ENCODE measurements at regions of chr11 and their contacts with region 1.

Region 1: DNA sequence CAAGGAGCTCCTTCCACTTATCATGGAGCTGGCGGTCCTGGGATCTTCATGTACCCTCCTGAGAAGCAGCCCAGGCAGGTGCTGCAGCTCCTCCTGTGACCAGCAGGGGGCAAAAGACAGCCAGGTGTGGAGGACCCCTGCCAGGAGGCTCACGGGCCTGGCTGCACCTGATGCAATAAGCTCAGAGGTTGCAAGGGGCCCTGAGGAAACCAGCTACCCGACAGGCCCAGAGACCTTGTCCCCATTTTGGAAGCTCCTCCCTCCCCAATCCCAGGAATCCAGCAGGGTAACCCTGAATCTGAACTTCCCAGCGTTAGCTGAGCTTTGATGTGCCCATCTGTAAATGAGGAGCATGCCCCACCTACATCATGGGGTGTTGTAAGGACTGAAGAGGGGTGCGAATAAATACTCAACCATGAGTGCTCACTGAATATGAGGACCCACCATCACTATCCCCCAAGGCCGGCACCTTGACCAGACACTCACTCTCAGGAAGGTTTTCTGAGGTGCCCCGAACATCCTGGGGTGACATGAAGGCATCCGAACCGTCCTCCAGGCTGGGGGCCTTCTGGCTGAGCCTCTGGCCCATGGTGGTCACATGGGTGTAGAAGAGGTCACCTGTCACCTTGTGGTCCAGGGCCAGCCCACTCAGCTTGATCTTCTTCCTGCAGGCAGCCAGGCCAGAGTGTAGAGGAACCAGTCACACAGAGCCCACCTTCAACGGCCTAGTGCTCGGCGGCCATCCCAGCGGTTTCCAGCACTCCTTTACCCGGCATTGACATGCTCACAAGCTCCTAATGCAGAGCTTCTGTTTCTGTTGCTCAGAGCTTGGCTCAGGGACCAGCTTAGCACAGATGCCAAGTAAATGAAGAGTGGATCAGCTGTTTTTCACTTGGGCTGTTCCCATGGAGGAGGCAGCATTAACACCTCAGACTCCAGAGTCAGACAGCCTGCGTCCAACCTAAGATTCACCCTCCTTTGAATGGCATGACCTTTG is 21.7 kb downstream of the SLC43A1 start:
- DNase-seq: peak; percentile 73
- ATAC-seq: peak; percentile 90
- H3K4me3 ChIP-seq: no peak overlapping the region
- H3K27ac ChIP-seq: peak overlapping the region; percentile 37; the same call in 1 of the 2 replicates
- H3K4me1 ChIP-seq: peaks cover 5 to 7% of the 10 kb centered on the region in 2 experiments; a peak in 2 of 4 replicates
- H3K27me3 ChIP-seq: no peaks in the 10 kb centered on the region
- CTCF ChIP-seq: peak; percentile 73 to 98 (median 87)
- POLR2A ChIP-seq: no peak
- RAD21 ChIP-seq: peak; percentile 78

Region 2: GRCh38 chr11:57345555-57346211 is 148.1 kb before region 1 on chr11:
- CTCF ChIA-PET with region 1: interaction called, 13 read pairs
- POLR2A ChIA-PET with region 1: no interaction called
- RAD21 ChIA-PET with region 1: no interaction called
- intact Hi-C with region 1: no loop called
- DNase-seq: peak; percentile 76
- ATAC-seq: peak; percentile 84
- H3K4me3 ChIP-seq: no peak overlapping the region
- H3K27ac ChIP-seq: no peak overlapping the region
- H3K4me1 ChIP-seq: peaks cover 3 to 19% of the 10 kb centered on the region in 2 experiments; a peak in 3 of 4 replicates
- H3K27me3 ChIP-seq: no peaks in the 10 kb centered on the region
- CTCF ChIP-seq: peak; percentile 44 to 69 (median 67); a peak in 5 of 6 replicates
- POLR2A ChIP-seq: no peak
- RAD21 ChIP-seq: peak; percentile 74

Region 3: GRCh38 chr11:57482782-57483561 is 10.8 kb before region 1 on chr11:
- CTCF ChIA-PET with region 1: interaction called, 23 read pairs
- POLR2A ChIA-PET with region 1: no interaction called
- RAD21 ChIA-PET with region 1: no interaction called
- intact Hi-C with region 1: no loop called
- DNase-seq: no peak
- ATAC-seq: no peak
- H3K4me3 ChIP-seq: no peak overlapping the region
- H3K27ac ChIP-seq: no peak overlapping the region
- H3K4me1 ChIP-seq: no peaks in the 10 kb centered on the region
- H3K27me3 ChIP-seq: no peaks in the 10 kb centered on the region
- CTCF ChIP-seq: no peak
- POLR2A ChIP-seq: no peak
- RAD21 ChIP-seq: no peak

Region 4: GRCh38 chr11:57515332-57516060 is 21.7 kb after region 1 on chr11 and contains the start of gene SLC43A1:
- CTCF ChIA-PET with region 1: interaction called, 13 read pairs
- POLR2A ChIA-PET with region 1: interaction called, 7 read pairs
- RAD21 ChIA-PET with region 1: no interaction called
- intact Hi-C with region 1: no loop called
- DNase-seq: no peak
- ATAC-seq: peak; percentile 84
- H3K4me3 ChIP-seq: peak within 1 kb of the TSS; percentile 70 to 73
- H3K27ac ChIP-seq: peak within 1 kb of the TSS; percentile 45; the same call in 1 of the 2 replicates
- H3K4me1 ChIP-seq: peaks cover 3 to 15% of the 10 kb centered on the region in 2 experiments; a peak in 3 of 4 replicates
- H3K27me3 ChIP-seq: no peaks in the 10 kb centered on the region
- CTCF ChIP-seq: no peak
- POLR2A ChIP-seq: peak; percentile 64
- RAD21 ChIP-seq: no peak
- total RNA-seq, gene SLC43A1: 11.8 TPM

Region 5: GRCh38 chr11:57567515-57568329 is 73.9 kb after region 1 on chr11 and contains the start of gene UBE2L6:
- CTCF ChIA-PET with region 1: interaction called, 11 read pairs
- POLR2A ChIA-PET with region 1: no interaction called
- RAD21 ChIA-PET with region 1: interaction called in 1 of 2 experiments, 4 read pairs
- intact Hi-C with region 1: no loop called
- DNase-seq: no peak
- ATAC-seq: peak; percentile 87
- H3K4me3 ChIP-seq: peak within 1 kb of the TSS; percentile 66 to 73
- H3K27ac ChIP-seq: peak within 1 kb of the TSS; percentile 67
- H3K4me1 ChIP-seq: peaks cover 7 to 19% of the 10 kb centered on the region in 2 experiments; a peak in 3 of 4 replicates
- H3K27me3 ChIP-seq: no peaks in the 10 kb centered on the region
- CTCF ChIP-seq: no peak; a peak in 2 of 6 replicates
- POLR2A ChIP-seq: no peak
- RAD21 ChIP-seq: no peak
- total RNA-seq, gene UBE2L6: 24.8 TPM